GM12878 (cell line): ENCODE measurements at regions of chr15 and their contacts with region 1.

Region 1: GRCh38 chr15:98881526-98882520 is 125.8 kb downstream of the PGPEP1L start:
- DNase-seq: no peak
- ATAC-seq: peak; percentile 85
- H3K4me3 ChIP-seq: no peak overlapping the region
- H3K27ac ChIP-seq: no peak overlapping the region
- H3K4me1 ChIP-seq: no peaks in the 10 kb centered on the region
- H3K27me3 ChIP-seq: no peaks in the 10 kb centered on the region
- CTCF ChIP-seq: peak; percentile 50 to 58 (median 53); a peak in 5 of 6 replicates
- EP300 ChIP-seq: no peak
- POLR2A ChIP-seq: no peak
- RAD21 ChIP-seq: peak; percentile 50

Region 2: DNA sequence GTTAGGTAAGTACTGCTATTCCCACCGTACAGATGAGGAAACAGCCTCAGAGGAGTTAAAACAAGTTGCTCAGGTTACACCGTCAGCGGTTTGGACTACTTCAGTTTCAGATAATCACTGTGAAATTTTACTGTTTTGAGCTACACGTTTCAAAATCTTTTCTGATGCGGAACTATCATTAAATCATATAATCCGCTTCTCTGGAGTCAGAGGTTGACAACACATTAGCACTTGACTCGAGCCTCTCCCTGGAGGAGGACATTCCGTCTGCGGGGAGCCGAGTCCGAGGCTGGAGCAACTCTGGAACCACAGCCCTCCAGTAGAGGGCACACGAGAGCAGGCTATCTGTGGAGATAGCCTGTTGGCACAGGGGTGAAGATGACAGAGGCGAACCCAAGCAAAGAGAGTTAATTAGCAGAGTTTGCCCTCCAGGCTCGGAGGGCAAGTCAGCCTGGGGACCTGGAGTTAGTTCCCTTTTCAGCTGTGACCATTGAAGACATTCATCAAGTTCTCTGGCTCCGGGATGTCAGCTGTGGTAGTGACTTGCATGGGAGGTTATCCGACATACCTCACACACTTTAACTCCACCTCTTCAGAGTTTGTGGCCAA is 102.3 kb before region 1 on chr15:
- CTCF ChIA-PET with region 1: interaction called, 60 read pairs
- POLR2A ChIA-PET with region 1: no interaction called
- RAD21 ChIA-PET with region 1: interaction called, 8 read pairs
- SMC1A ChIA-PET with region 1: interaction called, 30 read pairs
- in situ Hi-C with region 1: no loop called
- intact Hi-C with region 1: loop called (anchors 2 kb)
- DNase-seq: peak; percentile 41
- ATAC-seq: peak; percentile 89
- H3K4me3 ChIP-seq: no peak overlapping the region
- H3K27ac ChIP-seq: no peak overlapping the region
- H3K4me1 ChIP-seq: peaks cover 19% of the 10 kb centered on the region
- H3K27me3 ChIP-seq: no peaks in the 10 kb centered on the region
- CTCF ChIP-seq: peak; percentile 80 to 99 (median 96)
- EP300 ChIP-seq: no peak
- POLR2A ChIP-seq: no peak
- RAD21 ChIP-seq: peak; percentile 84

Region 3: GRCh38 chr15:98860281-98861041 is 21.4 kb before region 1 on chr15:
- CTCF ChIA-PET with region 1: interaction called, 17 read pairs
- POLR2A ChIA-PET with region 1: no interaction called
- RAD21 ChIA-PET with region 1: interaction called, 4 read pairs
- SMC1A ChIA-PET with region 1: interaction called, 11 read pairs
- in situ Hi-C with region 1: no loop called
- intact Hi-C with region 1: no loop called
- DNase-seq: no peak
- ATAC-seq: no peak
- H3K4me3 ChIP-seq: no peak overlapping the region
- H3K27ac ChIP-seq: no peak overlapping the region
- H3K4me1 ChIP-seq: no peaks in the 10 kb centered on the region
- H3K27me3 ChIP-seq: no peaks in the 10 kb centered on the region
- CTCF ChIP-seq: no peak
- EP300 ChIP-seq: no peak
- POLR2A ChIP-seq: no peak
- RAD21 ChIP-seq: no peak

Region 4: GRCh38 chr15:98904544-98904943 is 22.7 kb after region 1 on chr15:
- CTCF ChIA-PET with region 1: interaction called, 11 read pairs
- POLR2A ChIA-PET with region 1: no interaction called
- RAD21 ChIA-PET with region 1: interaction called, 3 read pairs
- SMC1A ChIA-PET with region 1: interaction called, 12 read pairs
- in situ Hi-C with region 1: no loop called
- intact Hi-C with region 1: no loop called
- DNase-seq: no peak
- ATAC-seq: peak; percentile 82
- H3K4me3 ChIP-seq: no peak overlapping the region
- H3K27ac ChIP-seq: no peak overlapping the region
- H3K4me1 ChIP-seq: no peaks in the 10 kb centered on the region; the same call in 1 of the 2 replicates
- H3K27me3 ChIP-seq: no peaks in the 10 kb centered on the region
- CTCF ChIP-seq: peak; percentile 55 to 63 (median 62)
- EP300 ChIP-seq: no peak
- POLR2A ChIP-seq: no peak
- RAD21 ChIP-seq: peak; percentile 51

Region 5: GRCh38 chr15:98943601-98944151 is 61.9 kb after region 1 on chr15:
- CTCF ChIA-PET with region 1: interaction called, 14 read pairs
- POLR2A ChIA-PET with region 1: no interaction called
- RAD21 ChIA-PET with region 1: no interaction called
- SMC1A ChIA-PET with region 1: interaction called, 3 read pairs
- in situ Hi-C with region 1: no loop called
- intact Hi-C with region 1: no loop called
- DNase-seq: no peak
- ATAC-seq: peak; percentile 78
- H3K4me3 ChIP-seq: no peak overlapping the region
- H3K27ac ChIP-seq: no peak overlapping the region
- H3K4me1 ChIP-seq: no peaks in the 10 kb centered on the region
- H3K27me3 ChIP-seq: no peaks in the 10 kb centered on the region
- CTCF ChIP-seq: no peak
- EP300 ChIP-seq: no peak
- POLR2A ChIP-seq: no peak
- RAD21 ChIP-seq: 0 out of 2 replicates have a peak, but pooled peaks have one; percentile 1

Region 6: GRCh38 chr15:99059010-99059981 is 177.5 kb after region 1 on chr15:
- CTCF ChIA-PET with region 1: interaction called, 9 read pairs
- POLR2A ChIA-PET with region 1: no interaction called
- RAD21 ChIA-PET with region 1: interaction called, 18 read pairs
- SMC1A ChIA-PET with region 1: interaction called, 6 read pairs
- in situ Hi-C with region 1: no loop called
- intact Hi-C with region 1: no loop called
- DNase-seq: no peak
- ATAC-seq: peak; percentile 85
- H3K4me3 ChIP-seq: peak overlapping the region; percentile 69; the same call in 1 of the 2 replicates
- H3K27ac ChIP-seq: peak overlapping the region; percentile 43
- H3K4me1 ChIP-seq: peaks cover 16% of the 10 kb centered on the region
- H3K27me3 ChIP-seq: no peaks in the 10 kb centered on the region
- CTCF ChIP-seq: peak; percentile 57 to 71 (median 67); a peak in 5 of 6 replicates
- EP300 ChIP-seq: no peak
- POLR2A ChIP-seq: no peak
- RAD21 ChIP-seq: peak; percentile 81